Activated CD4-positive, alpha-beta memory T cell treated with anti-CD3 and anti-CD28 coated beads for 36 hours (primary cell): ENCODE measurements at regions of chr1 and their contacts with region 1.

Region 1: DNA sequence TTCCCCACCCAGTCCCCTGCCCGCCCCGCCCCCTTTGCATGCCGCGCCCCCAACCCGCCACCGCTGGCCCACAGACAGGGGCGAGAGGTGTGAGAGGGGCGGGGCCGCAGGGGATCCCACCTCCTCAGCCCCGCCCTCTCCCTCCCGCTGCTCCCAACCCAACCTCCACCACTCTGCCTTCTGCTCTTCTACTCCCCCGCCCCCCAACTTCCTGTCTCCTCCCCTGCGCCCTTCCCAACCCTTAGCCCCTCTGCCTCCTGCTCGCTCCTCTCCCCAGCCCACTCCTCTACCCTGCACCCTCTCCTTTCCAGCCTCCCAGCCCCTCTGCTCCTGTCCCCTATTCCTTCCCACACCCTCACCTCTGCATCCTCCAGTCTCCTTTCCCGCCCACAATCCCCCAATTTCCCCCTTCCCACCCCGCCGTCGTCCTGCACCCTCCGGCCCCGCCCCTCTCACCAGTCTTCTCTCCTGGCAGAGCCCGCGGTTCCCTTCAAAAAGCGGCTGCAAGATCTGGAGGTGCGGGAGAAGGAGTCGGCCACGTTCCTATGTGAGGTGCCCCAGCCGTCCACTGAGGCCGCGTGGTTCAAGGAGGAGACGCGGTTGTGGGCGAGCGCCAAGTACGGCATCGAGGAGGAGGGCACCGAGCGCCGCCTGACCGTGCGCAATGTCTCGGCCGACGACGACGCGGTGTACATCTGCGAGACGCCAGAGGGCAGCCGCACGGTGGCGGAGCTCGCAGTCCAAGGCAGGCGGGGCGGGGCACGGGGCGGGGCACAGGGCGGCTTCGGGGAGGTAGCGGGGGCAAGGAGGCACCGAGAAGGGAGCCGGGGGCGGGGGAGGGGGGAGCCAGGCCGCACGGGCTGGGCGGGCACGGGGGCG is 5.4 kb downstream of the OBSCN start:
- DNase-seq: peak; percentile 94
- H3K4me3 Mint-ChIP-seq: peak overlapping the region; percentile 82
- H3K27ac Mint-ChIP-seq: peak overlapping the region; percentile 54
- H3K4me1 Mint-ChIP-seq: peaks cover 2% of the 10 kb centered on the region
- H3K27me3 Mint-ChIP-seq: no peaks in the 10 kb centered on the region

Region 2: DNA sequence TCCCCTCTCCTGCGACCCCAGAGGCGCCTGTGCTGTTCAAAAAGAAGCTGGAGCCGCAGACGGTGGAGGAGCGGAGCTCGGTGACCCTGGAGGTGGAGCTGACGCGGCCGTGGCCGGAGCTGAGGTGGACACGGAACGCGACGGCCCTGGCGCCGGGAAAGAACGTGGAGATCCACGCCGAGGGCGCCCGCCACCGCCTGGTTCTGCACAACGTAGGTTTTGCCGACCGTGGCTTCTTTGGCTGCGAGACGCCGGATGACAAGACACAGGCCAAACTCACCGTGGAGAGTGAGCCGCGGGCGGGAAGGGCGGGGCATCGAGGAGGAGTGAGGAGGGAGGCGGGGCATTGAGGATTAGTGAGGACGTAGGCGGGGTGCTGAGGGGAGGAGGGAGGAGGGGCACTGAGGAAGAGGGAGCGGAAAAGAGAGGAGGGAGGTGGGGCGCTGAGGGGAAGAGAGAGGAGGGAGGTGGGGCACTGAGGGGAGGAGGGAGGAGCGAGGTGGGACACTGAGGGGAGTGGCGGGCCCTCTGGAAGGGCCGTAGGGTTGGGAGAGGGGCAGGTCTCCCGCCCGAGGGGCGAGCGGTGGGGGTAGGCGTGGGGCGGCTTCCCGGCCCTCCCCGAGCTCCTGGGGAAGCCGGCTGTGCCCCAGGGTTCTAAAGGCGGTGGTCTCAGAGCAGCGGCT is 62.7 kb after region 1 on chr1:
- CTCF ChIA-PET with region 1: interaction called, 6 read pairs
- POLR2A ChIA-PET with region 1: no interaction called
- intact Hi-C with region 1: loop called (anchors 1 kb)
- DNase-seq: peak; percentile 94
- H3K4me3 Mint-ChIP-seq: peak overlapping the region; percentile 70
- H3K27ac Mint-ChIP-seq: no peak overlapping the region
- H3K4me1 Mint-ChIP-seq: peaks cover 6% of the 10 kb centered on the region
- H3K27me3 Mint-ChIP-seq: no peaks in the 10 kb centered on the region